SK-N-SH (cell line): ENCODE measurements at regions of chrX and their contacts with region 1.

Region 1: GRCh38 chrX:39688576-39689375 is 409.0 kb downstream of the BCOR start:
- DNase-seq: peak; percentile 89
- H3K4me3 ChIP-seq: peak overlapping the region; percentile 16 to 46; a peak in 3 of 4 replicates
- H3K27ac ChIP-seq: peak overlapping the region in 1 of 2 experiments; percentile 93; a peak in 2 of 4 replicates
- H3K4me1 ChIP-seq: peaks cover 0 to 20% of the 10 kb centered on the region in 2 experiments; a peak in 2 of 4 replicates
- H3K27me3 ChIP-seq: peaks cover 5% of the 10 kb centered on the region; the same call in 1 of the 2 replicates
- CTCF ChIP-seq: no peak
- EP300 ChIP-seq: no peak
- RAD21 ChIP-seq: peak; percentile 10; the same call in 1 of the 2 replicates

Region 2: GRCh38 chrX:39716401-39716800 is 27.6 kb after region 1 on chrX:
- CTCF ChIA-PET with region 1: no interaction called
- POLR2A ChIA-PET with region 1: interaction called, 12 read pairs
- DNase-seq: peak; percentile 36
- H3K4me3 ChIP-seq: no peak overlapping the region
- H3K27ac ChIP-seq: peak overlapping the region in 1 of 2 experiments; percentile 96; a peak in 3 of 4 replicates
- H3K4me1 ChIP-seq: peaks cover 0 to 28% of the 10 kb centered on the region in 2 experiments; a peak in 1 of 4 replicates
- H3K27me3 ChIP-seq: peaks cover 8% of the 10 kb centered on the region; the same call in 1 of the 2 replicates
- CTCF ChIP-seq: no peak
- EP300 ChIP-seq: peak in 1 of 2 experiments; percentile 23; a peak in 1 of 4 replicates
- RAD21 ChIP-seq: no peak

Region 3: GRCh38 chrX:40806513-40807220 is 1117.9 kb after region 1 on chrX:
- CTCF ChIA-PET with region 1: no interaction called
- POLR2A ChIA-PET with region 1: no interaction called
- DNase-seq: no peak
- H3K4me3 ChIP-seq: no peak overlapping the region
- H3K27ac ChIP-seq: no peak overlapping the region
- H3K4me1 ChIP-seq: no peaks in the 10 kb centered on the region
- H3K27me3 ChIP-seq: no peaks in the 10 kb centered on the region; the same call in 1 of the 2 replicates
- CTCF ChIP-seq: no peak
- EP300 ChIP-seq: no peak
- RAD21 ChIP-seq: no peak